GM10248 (cell line): ENCODE measurements at regions of chr4 and their contacts with region 1.

Region 1: DNA sequence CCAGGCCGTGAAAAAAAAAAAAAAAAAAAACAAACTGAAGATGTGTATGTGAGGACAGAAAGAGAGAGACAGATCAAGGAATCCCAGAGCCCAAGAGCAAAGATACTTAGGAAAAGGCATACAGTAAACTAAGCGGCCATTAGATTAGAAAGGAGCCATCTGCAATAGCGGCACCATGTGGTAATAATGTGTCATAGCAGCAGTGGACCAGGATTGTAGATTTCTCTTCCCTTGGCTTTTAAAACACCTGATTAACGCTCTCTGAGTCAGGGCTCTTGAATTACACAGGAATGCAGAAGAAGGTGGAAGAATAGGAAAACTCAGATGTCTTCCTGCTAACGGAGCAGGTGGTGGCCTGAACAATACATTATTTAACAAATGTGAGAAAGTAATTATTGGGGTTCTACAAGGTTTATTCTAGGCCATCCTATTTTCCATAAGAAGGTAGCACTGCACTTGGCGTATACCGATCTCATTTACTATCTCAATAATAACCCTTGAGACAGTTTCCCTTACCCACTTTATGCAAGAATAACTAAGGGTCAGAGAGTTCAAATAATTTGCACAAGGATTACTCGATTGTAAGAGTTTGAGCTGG is 182.7 kb downstream of the KCNIP4 start:
- DNase-seq: peak; percentile 18
- CTCF ChIP-seq: peak; percentile 91

Region 2: DNA sequence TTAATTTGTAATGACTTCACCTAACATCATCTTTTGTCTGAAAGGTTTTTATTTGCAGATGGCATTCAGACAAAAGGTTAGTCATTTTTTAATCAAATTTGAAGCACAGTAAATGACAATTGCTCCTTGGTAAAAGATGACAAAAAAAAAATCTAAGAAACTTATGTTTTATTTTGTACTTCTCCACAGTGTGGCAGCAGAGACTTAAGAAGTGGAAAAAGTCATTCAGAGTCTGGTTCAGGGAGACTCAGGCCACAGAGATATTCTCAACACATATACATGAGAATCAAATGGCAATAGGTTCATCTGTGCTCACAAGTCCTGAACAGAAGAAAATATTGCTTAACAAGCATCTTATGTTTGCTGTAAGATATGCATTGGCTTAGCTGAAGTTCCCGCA is 253.6 kb before region 1 on chr4:
- CTCF ChIA-PET with region 1: interaction called, 16 read pairs
- POLR2A ChIA-PET with region 1: no interaction called
- DNase-seq: no peak
- CTCF ChIP-seq: peak; percentile 33

Region 3: GRCh38 chr4:21753084-21753760 is 12.7 kb before region 1 on chr4:
- CTCF ChIA-PET with region 1: interaction called, 39 read pairs
- POLR2A ChIA-PET with region 1: no interaction called
- DNase-seq: no peak
- CTCF ChIP-seq: no peak